GM12878 (cell line): ENCODE measurements at regions of chr12 and their contacts with region 1.

Region 1: GRCh38 chr12:26274441-26275312 is 79.3 kb downstream of the SSPN start:
- DNase-seq: peak; percentile 94
- ATAC-seq: peak; percentile 95
- H3K4me3 ChIP-seq: no peak overlapping the region
- H3K27ac ChIP-seq: peak overlapping the region; percentile 73
- H3K4me1 ChIP-seq: peaks cover 44% of the 10 kb centered on the region
- H3K27me3 ChIP-seq: no peaks in the 10 kb centered on the region
- CTCF ChIP-seq: peak in 1 of 3 experiments; percentile 18; a peak in 1 of 6 replicates
- EP300 ChIP-seq: peak; percentile 37 to 79; a peak in 3 of 4 replicates
- POLR2A ChIP-seq: peak; percentile 40; the same call in 1 of the 2 replicates
- RAD21 ChIP-seq: peak; percentile 37; the same call in 1 of the 2 replicates

Region 2: DNA sequence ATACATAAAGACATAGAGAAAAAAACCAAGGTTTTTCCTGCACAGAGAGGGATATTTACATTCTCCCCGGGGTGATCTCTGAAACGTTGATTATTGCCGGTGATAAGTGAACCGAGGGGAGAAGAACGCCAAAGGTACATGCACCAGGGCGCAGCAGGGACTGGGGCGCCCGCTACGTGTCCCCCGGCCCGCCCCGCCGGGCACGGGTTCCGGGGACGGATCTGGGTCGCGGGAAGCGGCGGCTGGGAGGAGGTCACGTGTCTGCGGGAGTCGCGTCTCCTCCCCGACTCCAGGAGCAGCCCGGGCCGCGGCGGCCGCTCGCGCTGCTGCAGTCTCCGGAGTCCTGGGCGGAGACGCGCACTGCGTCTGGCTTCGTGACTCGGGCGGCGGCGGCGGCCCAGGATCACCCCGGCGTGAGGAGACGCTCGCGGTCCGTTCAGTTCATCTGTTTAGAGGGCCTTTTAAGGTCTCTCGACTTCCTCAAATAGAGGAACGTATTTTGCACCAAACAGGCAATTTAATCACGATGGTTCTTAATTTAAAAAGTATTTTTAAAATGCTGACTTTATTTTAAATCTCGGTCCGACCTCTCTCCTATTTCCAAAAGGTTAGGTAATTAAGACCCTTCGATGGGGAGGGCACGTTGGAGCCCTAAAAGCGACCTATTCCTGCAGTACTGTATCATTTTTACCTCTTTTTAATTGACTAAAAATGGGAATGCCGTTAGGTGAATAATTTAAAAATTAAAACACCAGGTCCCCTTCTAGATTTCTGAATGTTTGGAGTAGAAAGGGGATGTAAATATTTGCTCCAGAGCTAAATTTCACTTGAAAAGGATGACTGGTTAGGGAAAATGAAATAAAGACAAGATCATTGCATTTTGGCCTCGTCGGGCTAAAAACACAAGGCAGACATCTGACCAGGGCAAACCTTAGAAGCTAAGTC is 148.1 kb before region 1 on chr12:
- CTCF ChIA-PET with region 1: interaction called, 28 read pairs
- POLR2A ChIA-PET with region 1: interaction called, 5 read pairs
- RAD21 ChIA-PET with region 1: interaction called, 29 read pairs
- SMC1A ChIA-PET with region 1: interaction called, 18 read pairs
- in situ Hi-C with region 1: no loop called
- intact Hi-C with region 1: loop called (anchors 5 kb)
- DNase-seq: no peak
- ATAC-seq: peak; percentile 73
- H3K4me3 ChIP-seq: peak overlapping the region; percentile 80
- H3K27ac ChIP-seq: no peak overlapping the region
- H3K4me1 ChIP-seq: peaks cover 20% of the 10 kb centered on the region
- H3K27me3 ChIP-seq: peaks cover 10 to 41% of the 10 kb centered on the region in 2 experiments
- CTCF ChIP-seq: no peak
- EP300 ChIP-seq: no peak
- POLR2A ChIP-seq: no peak
- RAD21 ChIP-seq: no peak

Region 3: DNA sequence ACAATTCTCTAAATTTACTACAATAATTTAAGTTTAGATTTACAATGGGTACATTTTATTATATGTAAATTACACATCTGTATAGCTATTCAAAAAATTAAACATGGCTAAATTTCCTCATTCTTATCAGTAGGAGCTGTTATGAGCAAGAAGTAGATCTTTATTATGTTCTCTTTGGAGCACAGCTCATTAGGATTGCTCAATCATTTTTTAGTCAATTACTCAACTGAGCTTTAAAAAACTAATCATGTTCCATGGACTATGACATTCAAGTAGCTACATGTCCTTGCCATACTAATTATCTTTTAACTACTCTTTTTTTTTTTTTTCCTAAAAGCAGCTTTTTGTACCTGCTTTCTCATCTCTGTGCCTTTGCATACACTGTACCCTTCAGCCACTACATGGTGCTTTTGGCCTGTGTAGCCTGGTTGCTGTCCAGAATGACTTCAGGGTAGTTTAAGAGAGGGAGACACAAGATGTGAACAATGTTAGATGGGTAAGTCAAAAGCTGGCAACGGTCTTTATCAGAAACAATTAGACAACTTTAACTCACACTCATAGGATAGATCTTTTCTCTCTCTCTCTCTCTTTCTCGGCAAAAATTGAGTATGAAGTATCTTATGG is 10.3 kb before region 1 on chr12:
- CTCF ChIA-PET with region 1: interaction called, 4 read pairs
- POLR2A ChIA-PET with region 1: interaction called, 4 read pairs
- RAD21 ChIA-PET with region 1: interaction called, 5 read pairs
- SMC1A ChIA-PET with region 1: interaction called, 17 read pairs
- in situ Hi-C with region 1: no loop called
- intact Hi-C with region 1: no loop called
- DNase-seq: no peak
- ATAC-seq: no peak
- H3K4me3 ChIP-seq: no peak overlapping the region
- H3K27ac ChIP-seq: no peak overlapping the region
- H3K4me1 ChIP-seq: no peaks in the 10 kb centered on the region
- H3K27me3 ChIP-seq: no peaks in the 10 kb centered on the region; a peak in 2 of 4 replicates
- CTCF ChIP-seq: no peak
- EP300 ChIP-seq: no peak
- POLR2A ChIP-seq: no peak
- RAD21 ChIP-seq: no peak

Region 4: DNA sequence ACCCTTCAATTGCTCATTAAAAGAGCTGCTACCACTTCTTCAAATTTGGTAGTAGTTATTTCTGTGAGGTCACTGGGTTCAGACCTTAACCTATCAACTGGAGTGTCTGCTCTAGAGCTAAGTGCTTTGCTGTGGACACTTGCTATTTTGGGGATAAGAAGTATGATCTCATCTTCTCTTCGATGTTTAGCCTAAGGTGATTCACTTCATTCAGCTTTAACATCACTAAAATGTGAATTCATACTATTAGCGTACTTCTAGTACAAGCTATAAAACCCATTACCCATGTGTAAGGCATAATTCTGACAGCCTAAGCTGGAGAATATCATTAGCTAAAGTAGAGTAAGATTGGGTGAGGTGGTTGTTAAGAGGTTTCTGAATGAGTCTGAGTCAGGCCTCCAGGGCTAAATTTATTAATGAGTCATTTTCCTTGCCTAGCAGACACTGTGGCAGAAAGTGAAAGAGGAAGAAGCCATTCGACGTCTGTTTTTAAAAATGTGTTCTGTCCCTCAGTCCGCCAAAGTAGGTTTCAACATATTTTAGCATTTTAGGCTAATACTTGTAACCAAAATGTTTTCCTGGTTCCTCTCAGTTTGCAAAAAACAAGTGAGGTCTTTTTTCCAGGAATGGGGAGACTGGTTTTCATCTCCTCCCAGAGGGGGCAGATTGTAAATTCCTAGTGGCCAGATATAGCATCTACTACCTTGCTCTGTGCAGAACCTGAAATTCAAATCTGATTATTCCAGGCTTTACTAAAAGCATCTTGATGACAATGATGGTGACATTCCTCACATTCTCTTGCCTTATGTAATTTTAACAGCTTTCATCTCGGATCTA is 24.3 kb after region 1 on chr12:
- CTCF ChIA-PET with region 1: interaction called, 46 read pairs
- POLR2A ChIA-PET with region 1: interaction called, 41 read pairs
- RAD21 ChIA-PET with region 1: interaction called, 111 read pairs
- SMC1A ChIA-PET with region 1: interaction called, 203 read pairs
- in situ Hi-C with region 1: no loop called
- intact Hi-C with region 1: loop called (anchors 1 kb)
- DNase-seq: peak; percentile 91
- ATAC-seq: peak; percentile 98
- H3K4me3 ChIP-seq: 0 out of 2 replicates have a peak overlapping the region, but pooled peaks have one; percentile 4
- H3K27ac ChIP-seq: peak overlapping the region; percentile 61; the same call in 1 of the 2 replicates
- H3K4me1 ChIP-seq: peaks cover 20% of the 10 kb centered on the region
- H3K27me3 ChIP-seq: no peaks in the 10 kb centered on the region; a peak in 1 of 4 replicates
- CTCF ChIP-seq: no peak
- EP300 ChIP-seq: peak; percentile 95 to 98
- POLR2A ChIP-seq: no peak
- RAD21 ChIP-seq: 0 out of 2 replicates have a peak, but pooled peaks have one; percentile 24

Region 5: DNA sequence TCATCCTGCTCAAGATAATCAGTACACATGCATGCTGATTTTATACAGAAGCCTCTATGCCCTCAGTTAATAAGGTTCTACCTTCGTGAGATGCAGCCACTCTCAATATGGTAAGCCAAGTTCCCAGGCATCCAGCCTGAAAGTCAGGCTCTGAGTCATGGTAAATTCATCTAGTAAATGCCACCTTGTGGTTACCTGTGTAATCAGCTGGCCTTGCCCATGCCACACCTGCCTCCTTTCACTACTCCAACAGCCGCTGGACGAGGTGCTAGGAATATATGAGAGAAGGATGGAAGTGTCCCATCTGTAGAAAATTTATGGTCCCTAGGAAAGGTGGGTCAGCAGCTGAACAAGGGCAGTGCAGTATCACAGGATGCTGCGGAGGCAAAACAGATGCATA is 128.0 kb after region 1 on chr12:
- CTCF ChIA-PET with region 1: no interaction called
- POLR2A ChIA-PET with region 1: no interaction called
- RAD21 ChIA-PET with region 1: no interaction called
- SMC1A ChIA-PET with region 1: no interaction called
- in situ Hi-C with region 1: no loop called
- intact Hi-C with region 1: no loop called
- DNase-seq: no peak
- ATAC-seq: peak; percentile 36; the same call in 2 of the 3 replicates
- H3K4me3 ChIP-seq: no peak overlapping the region
- H3K27ac ChIP-seq: no peak overlapping the region
- H3K4me1 ChIP-seq: no peaks in the 10 kb centered on the region
- H3K27me3 ChIP-seq: no peaks in the 10 kb centered on the region
- CTCF ChIP-seq: peak in 1 of 3 experiments; percentile 8; a peak in 2 of 6 replicates
- EP300 ChIP-seq: no peak
- POLR2A ChIP-seq: no peak
- RAD21 ChIP-seq: no peak